Activated CD4-positive, alpha-beta T cell treated with anti-CD3 and anti-CD28 coated beads, Interleukin-2, amount 10 ng/mL, durations not matched to agents 24 days and 14 days (primary cell): ENCODE measurements at regions of chr4 and their contacts with region 1.

Region 1: DNA sequence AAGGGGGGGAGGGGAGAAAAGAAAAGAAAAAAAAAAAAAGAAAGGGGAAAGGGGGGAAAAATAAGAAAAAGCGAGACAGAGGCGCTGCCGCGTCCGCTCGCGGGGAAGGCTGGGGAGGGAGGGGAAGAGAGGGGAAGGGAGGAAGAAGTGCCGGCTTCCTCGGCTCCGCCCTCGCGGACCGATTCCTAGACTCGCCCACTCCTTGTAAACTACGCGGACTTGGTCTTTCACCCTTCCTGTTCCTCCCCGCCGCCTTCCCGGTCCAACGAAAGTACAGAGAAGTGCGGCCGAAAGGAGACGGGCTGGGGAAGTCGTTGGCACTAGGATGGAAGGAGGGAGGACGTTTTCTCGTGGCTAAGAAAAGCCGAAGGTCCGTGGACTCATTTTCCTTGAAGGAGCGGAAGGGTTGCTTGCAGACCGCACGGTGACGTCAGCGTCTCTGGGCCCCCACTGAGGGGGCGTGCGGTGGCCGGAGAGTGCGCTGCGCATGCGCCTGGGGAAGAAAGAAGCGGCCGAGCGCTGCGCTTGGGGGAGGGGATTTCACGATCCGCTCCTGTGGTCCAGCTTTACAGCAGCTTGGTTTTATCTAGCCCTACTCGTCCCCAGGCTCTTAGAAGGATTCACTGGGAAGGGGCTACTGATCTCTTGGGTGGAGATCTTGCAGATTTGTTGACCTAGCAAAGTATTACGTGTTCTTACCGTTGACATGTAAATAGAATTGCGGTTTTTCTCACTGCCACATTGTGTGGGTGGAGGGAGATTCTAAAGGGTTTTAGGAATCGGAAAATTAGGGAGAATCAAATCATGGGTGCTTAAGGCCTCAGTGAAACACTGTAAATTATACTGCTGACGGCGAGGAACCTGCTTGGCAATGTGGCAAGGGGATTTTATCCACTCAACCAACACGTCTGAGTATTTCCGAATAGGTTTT is at the start of gene CCNI:
- DNase-seq: peak; percentile 97
- H3K4me3 Mint-ChIP-seq: no peak within 1 kb of the TSS
- H3K27ac Mint-ChIP-seq: peak within 1 kb of the TSS; percentile 100
- H3K4me1 Mint-ChIP-seq: peaks cover 34% of the 10 kb centered on the region
- H3K27me3 Mint-ChIP-seq: peaks cover 6% of the 10 kb centered on the region
- total RNA-seq, gene CCNI: 214 TPM in 2 replicates

Region 2: DNA sequence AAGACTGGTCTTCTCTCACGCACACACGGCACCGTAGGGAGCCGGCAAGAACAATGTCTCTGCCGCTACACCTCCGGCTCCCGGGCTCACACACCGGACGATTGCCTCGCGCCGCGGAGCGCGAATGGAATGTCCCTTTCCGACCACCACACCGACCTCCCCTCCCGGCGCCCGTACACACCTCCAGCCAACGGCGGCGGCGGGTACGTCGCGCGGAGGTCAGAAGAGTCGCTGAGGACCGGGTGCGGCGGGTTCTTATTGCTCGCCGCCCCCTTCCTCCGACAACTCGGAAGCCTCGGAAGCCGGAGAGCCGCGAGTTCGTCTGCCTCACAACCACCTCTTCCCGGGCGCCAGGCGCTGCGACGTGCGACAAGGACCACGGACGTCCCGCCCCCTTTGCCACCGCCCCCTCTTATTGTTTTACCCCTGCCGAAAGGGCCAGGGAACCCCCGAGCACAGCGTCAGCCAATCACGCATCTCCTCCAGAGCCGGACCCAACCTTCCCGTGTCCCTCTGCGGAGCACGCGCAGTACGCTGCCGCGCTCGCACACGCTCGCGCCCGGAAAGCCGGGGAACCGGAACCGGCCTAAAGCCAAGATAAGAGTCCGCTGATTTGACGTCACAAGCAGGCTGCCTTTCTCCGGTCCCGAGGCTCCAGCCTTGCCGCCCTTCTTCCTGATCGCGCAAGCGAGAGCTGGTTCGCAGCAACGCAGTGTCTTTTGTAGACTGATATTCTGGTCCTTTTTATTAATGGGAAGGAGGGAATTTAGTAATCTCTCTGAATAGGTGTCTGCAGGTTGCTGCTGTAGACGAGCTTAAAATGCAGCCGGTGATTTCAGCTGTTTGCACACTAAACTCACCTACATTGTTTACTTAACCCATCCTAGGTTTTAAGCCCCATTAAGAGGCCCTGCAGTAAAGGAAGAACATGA is 1402.8 kb before region 1 on chr4 and contains the start of gene G3BP2:
- intact Hi-C with region 1: loop called (anchors 5 kb)
- DNase-seq: peak; percentile 99
- H3K4me3 Mint-ChIP-seq: peak within 1 kb of the TSS; percentile 98
- H3K27ac Mint-ChIP-seq: peak within 1 kb of the TSS; percentile 100
- H3K4me1 Mint-ChIP-seq: peaks cover 44% of the 10 kb centered on the region
- H3K27me3 Mint-ChIP-seq: no peaks in the 10 kb centered on the region
- total RNA-seq, gene G3BP2: 135 and 146 TPM in 2 replicates

Region 3: DNA sequence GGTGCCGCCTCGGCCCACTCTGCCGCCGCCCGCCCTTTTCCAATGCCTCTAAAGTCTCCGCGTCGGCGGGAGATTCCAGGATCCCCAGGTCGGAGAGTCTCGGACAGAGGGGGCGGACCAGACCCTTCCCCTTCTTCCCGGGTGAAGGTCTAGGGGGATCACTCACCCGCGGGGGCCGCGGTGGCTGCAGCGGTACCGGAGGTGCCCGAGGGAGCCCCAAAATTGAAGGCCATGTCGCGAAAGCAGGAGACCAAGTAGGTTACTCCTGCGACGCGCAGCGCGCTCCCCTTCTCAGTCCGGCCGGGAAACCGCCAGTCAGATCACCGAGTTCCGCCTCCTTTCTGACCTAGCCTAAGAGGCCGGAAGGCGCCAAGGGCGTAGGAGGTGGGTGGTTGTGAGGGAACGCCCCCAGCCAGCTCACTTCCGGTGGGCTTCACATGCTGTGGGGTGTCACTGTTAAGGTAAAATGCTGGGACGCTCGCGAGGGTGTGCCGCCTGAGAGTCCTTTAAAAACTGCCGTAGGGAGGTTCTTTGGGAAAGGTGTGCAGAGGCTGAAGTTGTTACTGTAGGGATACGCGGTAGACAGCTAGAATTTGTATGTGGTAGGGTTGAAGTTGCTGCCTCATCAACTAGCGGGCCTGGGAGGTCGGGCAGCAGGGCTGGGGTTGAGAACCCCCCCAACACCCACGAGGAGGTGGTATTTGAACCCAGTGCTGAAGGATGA is 927.8 kb before region 1 on chr4 and contains the start of gene NUP54:
- intact Hi-C with region 1: loop called (anchors 5 kb)
- DNase-seq: peak; percentile 99
- H3K4me3 Mint-ChIP-seq: peak within 1 kb of the TSS; percentile 95
- H3K27ac Mint-ChIP-seq: peak within 1 kb of the TSS; percentile 92
- H3K4me1 Mint-ChIP-seq: peaks cover 29% of the 10 kb centered on the region
- H3K27me3 Mint-ChIP-seq: peaks cover 1% of the 10 kb centered on the region
- total RNA-seq, gene NUP54: 72.6 and 75.1 TPM in 2 replicates

Region 4: GRCh38 chr4:76949276-76950051 is 126.7 kb before region 1 on chr4 and contains the start of gene SEPTIN11:
- intact Hi-C with region 1: no loop called
- DNase-seq: peak; percentile 91
- H3K4me3 Mint-ChIP-seq: peak within 1 kb of the TSS; percentile 87
- H3K27ac Mint-ChIP-seq: peak within 1 kb of the TSS; percentile 62
- H3K4me1 Mint-ChIP-seq: peaks cover 17% of the 10 kb centered on the region
- H3K27me3 Mint-ChIP-seq: peaks cover 67% of the 10 kb centered on the region
- total RNA-seq, gene SEPTIN11: 15.4 and 17.0 TPM in 2 replicates

Region 5: DNA sequence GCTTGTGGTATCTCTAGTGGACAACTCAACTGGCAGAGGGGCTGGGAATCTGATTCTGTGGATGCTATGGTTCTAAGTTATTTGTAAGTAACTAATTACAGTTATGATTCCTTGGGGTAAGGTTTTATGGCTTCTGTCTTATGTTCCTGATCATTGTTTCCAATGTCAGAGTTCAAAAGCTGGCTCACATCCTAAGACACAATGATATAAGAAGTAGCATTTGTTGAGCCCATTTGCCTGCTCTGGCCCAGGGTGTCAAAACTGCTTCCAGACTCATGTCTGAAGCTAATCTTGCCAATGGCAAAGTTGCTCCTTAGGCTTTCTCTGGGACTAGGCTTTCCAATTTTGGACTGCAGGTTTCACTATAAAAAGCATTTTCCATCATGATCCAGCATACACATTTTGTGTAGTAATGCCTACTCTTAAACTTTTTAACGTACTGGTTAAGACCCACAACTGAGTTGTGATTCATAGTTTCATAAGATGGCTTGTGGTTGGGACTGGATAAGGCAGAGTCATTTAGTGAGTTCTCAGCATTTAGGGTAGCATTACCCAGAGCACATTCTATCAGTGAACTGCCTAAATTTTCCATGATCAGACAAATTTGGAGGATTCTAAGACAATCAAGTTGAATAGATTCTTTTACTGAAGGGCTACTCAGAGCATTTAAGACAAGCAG is 50.4 kb before region 1 on chr4:
- intact Hi-C with region 1: loop called (anchors 1 kb)
- DNase-seq: peak; percentile 71
- H3K4me3 Mint-ChIP-seq: peak overlapping the region; percentile 51
- H3K27ac Mint-ChIP-seq: peak overlapping the region; percentile 50
- H3K4me1 Mint-ChIP-seq: peaks cover 34% of the 10 kb centered on the region
- H3K27me3 Mint-ChIP-seq: peaks cover 6% of the 10 kb centered on the region

Region 6: DNA sequence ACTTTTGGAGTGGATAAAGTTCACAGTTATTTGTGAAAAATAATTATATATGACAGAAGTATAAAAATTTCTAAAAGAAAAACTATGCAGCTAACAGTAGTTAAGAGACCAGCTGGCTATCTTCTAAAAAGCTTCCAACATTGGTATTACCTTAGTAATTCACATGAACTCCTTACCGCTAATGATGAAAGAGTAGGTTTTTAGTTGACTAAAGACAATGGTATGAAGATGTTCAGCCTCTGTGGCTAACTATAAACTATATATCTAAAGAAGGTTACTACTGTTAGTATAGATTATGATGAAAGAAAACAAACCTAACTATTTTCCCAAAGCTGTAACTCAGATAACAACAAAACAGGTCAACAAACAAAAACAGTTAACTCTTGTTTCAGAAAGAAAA is 10.8 kb before region 1 on chr4:
- intact Hi-C with region 1: no loop called
- DNase-seq: no peak
- H3K4me3 Mint-ChIP-seq: no peak overlapping the region
- H3K27ac Mint-ChIP-seq: peak overlapping the region; percentile 29
- H3K4me1 Mint-ChIP-seq: peaks cover 19% of the 10 kb centered on the region
- H3K27me3 Mint-ChIP-seq: no peaks in the 10 kb centered on the region

Region 7: DNA sequence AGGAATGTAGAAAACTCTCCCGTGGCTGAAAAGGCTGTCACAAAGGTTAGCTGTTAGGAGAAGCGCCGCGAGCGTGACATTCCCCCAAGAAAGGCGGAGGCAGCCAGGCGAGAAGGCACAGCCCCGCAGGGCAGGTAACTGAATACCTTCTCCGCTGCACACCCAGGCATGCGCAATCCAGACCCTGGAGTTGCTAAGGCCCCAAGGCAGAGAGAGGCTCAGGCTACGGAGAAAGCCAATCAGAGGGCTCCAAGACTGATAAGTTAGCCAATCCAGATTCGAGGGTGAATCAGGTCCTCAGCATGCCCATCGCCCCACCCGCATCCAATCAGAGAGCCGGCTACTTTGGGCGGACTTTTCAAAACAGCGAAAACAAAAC is 80.4 kb after region 1 on chr4:
- intact Hi-C with region 1: loop called (anchors 1 kb)
- DNase-seq: peak; percentile 99
- H3K4me3 Mint-ChIP-seq: peak overlapping the region; percentile 100
- H3K27ac Mint-ChIP-seq: peak overlapping the region; percentile 99
- H3K4me1 Mint-ChIP-seq: peaks cover 34% of the 10 kb centered on the region
- H3K27me3 Mint-ChIP-seq: peaks cover 3% of the 10 kb centered on the region

Region 8: GRCh38 chr4:77586951-77587383 is 510.8 kb after region 1 on chr4:
- intact Hi-C with region 1: loop called (anchors 1 kb)
- DNase-seq: peak; percentile 89
- H3K4me3 Mint-ChIP-seq: peak overlapping the region; percentile 73
- H3K27ac Mint-ChIP-seq: peak overlapping the region; percentile 92
- H3K4me1 Mint-ChIP-seq: peaks cover 56% of the 10 kb centered on the region
- H3K27me3 Mint-ChIP-seq: no peaks in the 10 kb centered on the region

Region 9: DNA sequence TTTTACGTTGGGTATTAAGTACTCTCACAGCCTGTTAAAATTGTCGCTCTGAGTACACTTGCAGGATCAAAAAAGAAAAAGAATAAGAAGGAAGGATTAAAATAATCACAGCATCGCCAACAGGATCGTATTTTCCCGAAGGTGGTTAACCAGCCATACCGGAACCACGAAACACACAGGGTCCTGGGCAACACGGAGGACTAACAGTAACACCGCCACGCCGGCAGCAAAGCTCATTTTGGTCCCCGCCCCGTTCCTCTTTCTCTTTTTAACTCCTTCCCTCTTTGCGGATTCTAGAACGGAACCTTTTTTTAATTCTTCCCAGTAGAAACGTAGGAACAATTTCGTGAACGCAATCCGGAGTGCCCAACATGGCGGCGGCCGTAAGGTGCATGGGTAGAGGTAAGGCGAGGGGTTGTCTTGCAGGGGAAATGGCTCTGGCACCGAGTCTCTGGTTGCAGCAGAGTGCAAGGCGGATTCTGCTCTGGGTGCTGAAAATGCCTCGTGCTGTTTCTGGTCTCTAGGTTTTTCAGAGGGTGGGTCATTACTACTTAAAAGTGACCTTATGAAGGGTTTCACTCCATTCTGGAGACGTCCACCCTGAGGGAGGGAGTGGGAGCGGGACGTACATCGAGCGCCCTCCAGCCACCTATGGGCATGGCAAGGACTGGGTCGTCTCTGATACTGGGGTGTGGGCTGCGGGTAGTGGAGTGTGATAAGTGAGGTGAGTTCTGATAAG is 786.5 kb after region 1 on chr4 and contains the start of gene MRPL1:
- intact Hi-C with region 1: loop called (anchors 1 kb)
- DNase-seq: peak; percentile 96
- H3K4me3 Mint-ChIP-seq: peak within 1 kb of the TSS; percentile 98
- H3K27ac Mint-ChIP-seq: peak within 1 kb of the TSS; percentile 100
- H3K4me1 Mint-ChIP-seq: peaks cover 47% of the 10 kb centered on the region
- H3K27me3 Mint-ChIP-seq: peaks cover 4% of the 10 kb centered on the region
- total RNA-seq, gene MRPL1: 65.0 and 72.7 TPM in 2 replicates